Tibial artery (tissue), 4 donors: ENCODE measurements at regions of chr3 and their contacts with region 1.

Region 1: GRCh38 chr3:141294848-141295247 is 63.2 kb downstream of the PXYLP1 start:
- DNase-seq: no peak
- H3K4me3 ChIP-seq: peak overlapping the region; percentile 46 to 48
- H3K27ac ChIP-seq: peak overlapping the region; percentile 53 to 80
- H3K4me1 ChIP-seq: peaks cover 0 to 51% (median 24%) of the 10 kb centered on the region in 4 donors
- H3K27me3 ChIP-seq: no peaks in the 10 kb centered on the region
- CTCF ChIP-seq: no peak

Region 2: GRCh38 chr3:140941434-140942220 is 353.2 kb before region 1 on chr3 and contains the start of gene SLC25A36:
- intact Hi-C with region 1: loop called (anchors 10 kb)
- DNase-seq: peak; percentile 98
- H3K4me3 ChIP-seq: peak within 1 kb of the TSS; percentile 90 to 91
- H3K27ac ChIP-seq: peak within 1 kb of the TSS; percentile 97 to 99
- H3K4me1 ChIP-seq: peaks cover 0 to 41% (median 19%) of the 10 kb centered on the region in 4 donors
- H3K27me3 ChIP-seq: no peaks in the 10 kb centered on the region
- CTCF ChIP-seq: no peak

Region 3: DNA sequence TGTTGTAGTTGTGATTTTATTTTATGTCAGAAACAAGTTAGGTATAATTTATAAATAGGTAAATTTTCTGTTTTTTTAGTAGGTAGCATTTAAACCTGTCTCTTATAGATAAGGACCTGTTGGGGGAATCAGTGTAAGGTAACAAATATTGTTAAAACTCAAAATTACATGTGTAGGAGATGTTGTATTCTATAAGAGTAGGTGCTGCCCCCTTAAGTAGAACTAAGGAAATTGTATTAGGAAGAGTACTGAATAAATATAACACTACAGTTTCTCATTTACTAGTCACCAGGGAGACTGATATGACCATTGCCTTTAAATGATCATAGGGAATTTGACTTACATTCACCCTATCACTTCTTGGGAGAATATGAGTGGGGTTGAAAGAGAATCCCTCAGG is 322.0 kb before region 1 on chr3:
- intact Hi-C with region 1: no loop called
- DNase-seq: no peak
- H3K4me3 ChIP-seq: no peak overlapping the region
- H3K27ac ChIP-seq: no peak overlapping the region
- H3K4me1 ChIP-seq: no peaks in the 10 kb centered on the region
- H3K27me3 ChIP-seq: no peaks in the 10 kb centered on the region
- CTCF ChIP-seq: no peak

Region 4: DNA sequence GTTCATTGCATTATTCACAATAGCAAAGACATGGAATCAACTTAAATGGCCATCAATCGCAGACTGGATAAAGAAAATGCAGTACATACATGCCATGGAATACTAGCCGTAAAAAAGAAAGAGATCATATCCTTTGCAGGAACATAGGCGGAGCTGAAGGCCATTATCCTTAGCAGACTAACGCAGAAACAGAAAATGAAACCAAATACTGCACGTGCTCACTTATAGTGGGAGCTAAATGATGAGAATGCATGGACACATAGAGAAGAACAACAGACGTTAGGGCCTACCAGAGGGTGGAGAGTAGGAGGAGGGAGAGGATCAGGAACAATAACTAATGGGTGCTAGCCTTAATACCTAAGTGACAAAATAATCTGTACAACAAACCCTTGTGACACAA is 249.8 kb after region 1 on chr3:
- intact Hi-C with region 1: no loop called
- DNase-seq: no peak
- H3K4me3 ChIP-seq: no peak overlapping the region
- H3K27ac ChIP-seq: no peak overlapping the region
- H3K4me1 ChIP-seq: no peaks in the 10 kb centered on the region
- H3K27me3 ChIP-seq: no peaks in the 10 kb centered on the region
- CTCF ChIP-seq: no peak